A549 (cell line): ENCODE measurements at regions of chr5 and their contacts with region 1.

Region 1: GRCh38 chr5:74640450-74640953 is at the start of gene ENC1:
- DNase-seq: peak; percentile 48 to 92
- ATAC-seq: peak; percentile 76 to 87
- H3K4me3 ChIP-seq: peak within 1 kb of the TSS; percentile 90
- H3K27ac ChIP-seq: peak within 1 kb of the TSS; percentile 92 to 94
- H3K4me1 ChIP-seq: peaks cover 40% of the 10 kb centered on the region
- CTCF ChIP-seq: no peak; the same call in 2 of the 3 replicates
- EP300 ChIP-seq: no peak
- POLR2A ChIP-seq: peak; percentile 97
- RAD21 ChIP-seq: peak; percentile 32 to 57; a peak in 3 of 5 replicates
- polyA plus RNA-seq, gene ENC1: 20.0 and 22.5 TPM in 2 replicates

Region 2: DNA sequence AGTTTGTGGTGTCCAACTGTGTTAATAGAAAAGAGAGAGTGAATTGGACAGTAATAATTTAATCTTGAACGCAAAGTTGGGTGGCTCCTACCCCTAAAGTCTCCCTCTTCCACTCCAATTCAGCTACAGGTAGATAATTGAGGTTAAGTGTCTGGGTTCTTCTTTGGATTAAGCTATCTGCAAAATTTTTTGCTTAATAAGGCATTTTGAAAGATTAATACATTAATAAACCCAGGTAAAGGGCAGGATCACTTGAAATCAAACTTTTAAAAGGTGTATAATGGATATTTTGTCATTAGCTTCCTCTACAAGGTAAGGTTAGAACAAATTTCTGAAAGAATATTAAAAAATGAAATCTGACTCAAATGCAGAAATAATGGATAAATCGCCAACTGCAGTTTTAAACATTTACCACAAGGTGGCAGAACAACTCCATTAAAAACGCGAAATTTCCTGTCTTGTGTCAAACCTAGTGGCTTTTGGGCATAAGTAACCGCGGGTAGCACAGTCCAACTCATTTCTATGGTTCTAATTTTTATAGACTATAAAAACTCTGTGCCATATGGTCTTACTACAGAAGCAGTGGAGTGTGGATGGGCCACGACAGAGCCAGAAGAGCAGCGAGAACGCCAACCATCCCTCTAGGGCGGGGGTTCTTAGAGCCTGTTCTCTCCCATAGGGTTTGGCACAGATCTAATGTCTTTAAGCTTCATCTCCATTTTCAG is 738.0 kb before region 1 on chr5:
- CTCF ChIA-PET with region 1: interaction called, 141 read pairs
- POLR2A ChIA-PET with region 1: interaction called, 4 read pairs
- DNase-seq: peak; percentile 41 to 68
- ATAC-seq: peak in 1 of 2 experiments; percentile 23; a peak in 1 of 6 replicates
- H3K4me3 ChIP-seq: no peak overlapping the region
- H3K27ac ChIP-seq: peak overlapping the region; percentile 50 to 81; a peak in 4 of 6 replicates
- H3K4me1 ChIP-seq: peaks cover 28% of the 10 kb centered on the region
- CTCF ChIP-seq: peak; percentile 90
- EP300 ChIP-seq: no peak
- POLR2A ChIP-seq: no peak
- RAD21 ChIP-seq: peak; percentile 83 to 90

Region 3: DNA sequence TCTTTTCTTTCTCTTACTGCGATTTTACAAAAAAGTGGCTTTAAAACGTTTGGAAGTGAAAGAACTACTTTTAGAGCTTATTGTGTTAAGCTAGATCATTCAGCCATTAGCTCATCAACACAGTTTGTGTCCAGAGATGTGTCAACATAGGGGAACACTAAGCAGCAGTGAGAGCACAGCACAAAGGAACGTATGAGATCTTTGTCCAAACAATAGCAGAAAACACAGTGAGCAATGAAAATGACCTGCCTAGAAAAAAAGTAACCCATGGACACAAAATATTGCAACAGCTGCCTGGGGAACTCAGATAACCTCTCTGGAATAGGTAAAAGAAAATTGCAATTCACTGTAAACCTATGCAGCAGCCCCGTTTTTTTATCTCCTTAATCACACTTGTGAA is 642.0 kb before region 1 on chr5:
- CTCF ChIA-PET with region 1: interaction called, 10 read pairs
- POLR2A ChIA-PET with region 1: no interaction called
- DNase-seq: no peak
- ATAC-seq: no peak
- H3K4me3 ChIP-seq: no peak overlapping the region
- H3K27ac ChIP-seq: no peak overlapping the region
- H3K4me1 ChIP-seq: no peaks in the 10 kb centered on the region
- CTCF ChIP-seq: no peak
- EP300 ChIP-seq: no peak
- POLR2A ChIP-seq: no peak
- RAD21 ChIP-seq: no peak

Region 4: GRCh38 chr5:74044936-74045335 is 595.6 kb before region 1 on chr5:
- CTCF ChIA-PET with region 1: interaction called, 19 read pairs
- POLR2A ChIA-PET with region 1: interaction called, 3 read pairs
- DNase-seq: no peak
- ATAC-seq: no peak
- H3K4me3 ChIP-seq: no peak overlapping the region
- H3K27ac ChIP-seq: no peak overlapping the region
- H3K4me1 ChIP-seq: peaks cover 8% of the 10 kb centered on the region; the same call in 1 of the 3 replicates
- CTCF ChIP-seq: no peak
- EP300 ChIP-seq: no peak
- POLR2A ChIP-seq: no peak
- RAD21 ChIP-seq: no peak

Region 5: GRCh38 chr5:74316064-74316679 is 324.3 kb before region 1 on chr5:
- CTCF ChIA-PET with region 1: interaction called, 5 read pairs
- POLR2A ChIA-PET with region 1: interaction called, 15 read pairs
- DNase-seq: peak; percentile 66 to 81
- ATAC-seq: peak; percentile 96
- H3K4me3 ChIP-seq: no peak overlapping the region
- H3K27ac ChIP-seq: peak overlapping the region; percentile 72 to 88
- H3K4me1 ChIP-seq: peaks cover 36% of the 10 kb centered on the region
- CTCF ChIP-seq: no peak
- EP300 ChIP-seq: peak in 1 of 2 experiments; percentile 40; a peak in 1 of 5 replicates
- POLR2A ChIP-seq: no peak; the same call in 1 of the 2 replicates
- RAD21 ChIP-seq: peak; percentile 8 to 10; a peak in 1 of 5 replicates

Region 6: DNA sequence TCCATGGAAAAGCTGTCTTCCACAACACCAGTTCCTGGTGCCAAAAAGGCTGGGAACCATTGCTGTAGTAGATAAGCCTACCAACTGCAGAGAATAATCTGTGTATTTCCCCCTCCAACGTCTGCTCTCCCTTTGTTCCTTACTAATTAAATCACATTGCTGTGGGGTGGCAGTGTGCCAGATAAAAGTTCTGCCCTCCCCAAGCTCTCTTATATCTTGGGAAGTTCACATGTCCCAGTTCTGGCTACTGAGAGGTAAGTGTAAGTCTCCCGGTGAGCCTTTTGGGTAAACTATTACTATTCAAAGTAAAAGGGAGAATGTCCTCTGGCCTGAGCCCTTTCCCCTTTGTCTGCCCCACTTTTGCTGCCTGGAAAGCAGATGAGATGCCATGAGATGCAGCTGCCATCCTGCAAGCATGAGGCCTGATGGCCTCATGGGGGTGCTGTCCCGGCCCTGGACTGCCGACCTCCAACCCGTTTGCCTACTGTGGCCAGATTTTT is 14.7 kb before region 1 on chr5:
- CTCF ChIA-PET with region 1: interaction called, 11 read pairs
- POLR2A ChIA-PET with region 1: interaction called, 43 read pairs
- DNase-seq: no peak
- ATAC-seq: peak in 1 of 2 experiments; percentile 46; a peak in 2 of 6 replicates
- H3K4me3 ChIP-seq: no peak overlapping the region
- H3K27ac ChIP-seq: no peak overlapping the region
- H3K4me1 ChIP-seq: peaks cover 36% of the 10 kb centered on the region
- CTCF ChIP-seq: no peak
- EP300 ChIP-seq: no peak
- POLR2A ChIP-seq: no peak
- RAD21 ChIP-seq: no peak